CD4-positive, alpha-beta memory T cell (primary cell): ENCODE measurements at regions of chr10 and their contacts with region 1.

Region 1: DNA sequence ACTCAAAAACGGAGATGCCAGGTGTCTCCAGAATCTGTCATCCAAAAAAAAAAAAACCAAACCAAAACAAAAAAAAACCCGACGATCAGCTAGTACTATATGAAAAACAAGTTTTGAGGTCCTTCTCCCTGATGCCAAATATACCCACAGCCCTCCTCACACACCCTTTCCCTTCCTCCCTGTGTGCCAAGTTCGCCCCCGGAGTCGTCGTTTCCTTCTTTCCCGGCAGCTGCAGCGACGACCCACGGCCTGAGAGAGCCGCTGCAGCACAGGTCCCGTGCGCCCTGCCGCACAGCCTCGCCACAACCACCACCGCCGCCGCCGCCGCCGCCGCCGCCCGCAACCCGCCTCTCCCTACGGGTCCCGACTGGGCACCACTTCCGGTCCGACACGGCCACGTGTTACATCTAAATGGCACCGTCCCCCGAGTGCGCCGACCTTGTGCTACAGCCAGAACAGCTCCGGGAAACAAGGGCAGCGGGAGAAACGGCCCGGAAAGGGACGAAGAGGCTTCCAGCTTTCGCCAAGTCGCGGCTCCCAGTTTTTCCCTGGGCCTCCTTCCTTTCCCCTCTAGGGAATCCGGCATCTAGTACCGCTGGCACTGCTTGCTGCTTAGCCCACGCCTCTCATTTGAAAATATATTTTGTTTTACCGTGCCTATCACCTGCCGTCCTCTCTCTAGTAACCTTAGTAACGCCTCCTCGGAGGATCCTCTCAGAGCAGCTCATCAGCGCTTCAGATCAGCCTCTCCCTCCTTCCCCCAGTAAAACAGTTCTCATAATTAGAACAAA is at the start of gene FRA10AC1:
- DNase-seq: peak; percentile 83 to 89 (median 84)
- H3K4me3 ChIP-seq: peak within 1 kb of the TSS; percentile 78 to 100
- H3K4me3 Mint-ChIP-seq: no peak within 1 kb of the TSS
- H3K27ac ChIP-seq: peak within 1 kb of the TSS; percentile 63
- H3K27ac Mint-ChIP-seq: no peak within 1 kb of the TSS
- H3K4me1 ChIP-seq: peaks cover 28% of the 10 kb centered on the region
- H3K4me1 Mint-ChIP-seq: peaks cover 6 to 23% (median 16%) of the 10 kb centered on the region in 4 donors
- H3K27me3 ChIP-seq: no peaks in the 10 kb centered on the region
- H3K27me3 Mint-ChIP-seq: no peaks in the 10 kb centered on the region
- total RNA-seq, gene FRA10AC1: 21.6 to 32.5 TPM

Region 2: DNA sequence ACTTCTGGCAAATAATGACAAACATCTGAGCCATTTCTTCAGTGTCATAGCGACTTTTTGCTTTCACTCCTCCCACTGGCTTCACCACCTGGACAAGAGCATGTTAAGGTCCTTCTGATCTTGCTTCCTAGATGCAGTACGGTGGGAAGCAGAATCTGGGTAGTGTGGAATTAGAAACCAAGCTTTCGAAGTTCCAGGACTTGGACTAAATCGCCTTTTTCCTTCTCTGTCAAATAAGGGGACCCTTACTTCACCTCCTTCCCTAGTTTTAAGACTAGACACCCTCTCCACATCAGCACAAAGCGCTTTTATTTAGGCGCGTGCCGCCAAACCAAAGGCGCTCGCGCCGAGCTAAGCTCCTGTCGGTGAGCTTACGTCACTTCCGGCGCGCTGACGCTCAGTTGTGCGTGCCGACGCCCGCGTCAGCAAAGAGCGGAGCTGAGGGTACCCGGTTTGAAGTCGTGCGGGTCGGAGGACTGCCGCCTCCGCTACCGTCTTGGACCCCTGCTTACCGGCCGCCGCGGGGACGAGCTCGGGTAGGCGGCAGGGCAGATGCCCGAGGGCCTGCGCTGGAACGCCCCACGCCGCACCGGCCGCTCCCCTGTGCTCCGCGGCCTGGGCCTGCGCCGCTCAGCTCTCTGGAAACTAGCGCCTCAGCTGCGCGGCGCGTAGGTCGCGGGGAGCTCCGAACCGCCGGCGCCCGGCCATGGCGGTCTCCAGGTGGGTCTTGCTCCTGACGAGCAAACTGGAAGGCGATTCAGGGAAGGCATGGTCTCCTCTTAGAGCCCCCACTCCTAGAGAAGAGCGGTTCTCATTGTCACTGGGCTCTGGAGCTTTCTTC is 1778.8 kb before region 1 on chr10 and contains the start of gene BTAF1:
- CTCF ChIA-PET with region 1: no interaction called
- POLR2A ChIA-PET with region 1: interaction called, 7 read pairs
- intact Hi-C with region 1: loop called (anchors 5 kb)
- DNase-seq: peak; percentile 89 to 93 (median 92)
- H3K4me3 ChIP-seq: peak within 1 kb of the TSS; percentile 79 to 87
- H3K4me3 Mint-ChIP-seq: peak within 1 kb of the TSS; percentile 90 to 99 (median 94)
- H3K27ac ChIP-seq: peak within 1 kb of the TSS; percentile 91
- H3K27ac Mint-ChIP-seq: peak within 1 kb of the TSS; percentile 96 to 100 (median 99)
- H3K4me1 ChIP-seq: peaks cover 50% of the 10 kb centered on the region
- H3K4me1 Mint-ChIP-seq: peaks cover 29 to 50% (median 38%) of the 10 kb centered on the region in 4 donors
- H3K27me3 ChIP-seq: no peaks in the 10 kb centered on the region
- H3K27me3 Mint-ChIP-seq: peaks cover 2% of the 10 kb centered on the region in 2 donors
- total RNA-seq, gene BTAF1: 69.1 to 76.9 TPM

Region 3: DNA sequence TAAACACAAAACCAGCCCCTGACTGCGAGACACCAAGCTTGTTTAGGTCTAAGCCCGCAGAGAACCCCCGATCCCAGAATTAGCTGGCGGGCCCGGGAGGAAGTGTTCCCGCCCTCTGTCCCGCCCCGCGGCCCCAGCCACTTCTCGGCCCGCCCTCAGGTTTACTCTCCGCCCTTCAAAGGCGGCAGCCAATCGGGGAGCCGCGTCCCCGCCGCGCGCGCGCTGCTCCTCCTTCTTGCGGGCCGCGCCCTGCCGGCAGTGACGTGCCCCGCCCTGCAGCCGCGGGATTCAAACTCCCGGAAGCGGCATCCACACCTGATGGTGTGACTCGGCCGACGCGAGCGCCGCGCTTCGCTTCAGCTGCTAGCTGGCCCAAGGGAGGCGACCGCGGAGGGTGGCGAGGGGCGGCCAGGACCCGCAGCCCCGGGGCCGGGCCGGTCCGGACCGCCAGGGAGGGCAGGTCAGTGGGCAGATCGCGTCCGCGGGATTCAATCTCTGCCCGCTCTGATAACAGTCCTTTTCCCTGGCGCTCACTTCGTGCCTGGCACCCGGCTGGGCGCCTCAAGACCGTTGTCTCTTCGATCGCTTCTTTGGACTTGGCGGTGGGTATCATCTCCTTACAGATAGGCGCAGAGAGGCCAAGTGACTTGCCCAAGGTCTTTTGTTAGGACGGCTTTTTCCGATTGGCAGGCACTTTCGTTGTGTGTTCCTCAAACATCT is 205.9 kb before region 1 on chr10 and contains the start of gene CEP55:
- CTCF ChIA-PET with region 1: no interaction called
- POLR2A ChIA-PET with region 1: no interaction called
- intact Hi-C with region 1: loop called (anchors 2 kb)
- DNase-seq: peak; percentile 93 to 97 (median 94)
- H3K4me3 ChIP-seq: peak within 1 kb of the TSS; percentile 83 to 94
- H3K4me3 Mint-ChIP-seq: peak within 1 kb of the TSS; percentile 92 to 95 (median 93)
- H3K27ac ChIP-seq: peak within 1 kb of the TSS; percentile 37
- H3K27ac Mint-ChIP-seq: peak within 1 kb of the TSS; percentile 54 to 92 (median 89)
- H3K4me1 ChIP-seq: peaks cover 23% of the 10 kb centered on the region
- H3K4me1 Mint-ChIP-seq: peaks cover 13 to 23% (median 19%) of the 10 kb centered on the region in 4 donors
- H3K27me3 ChIP-seq: no peaks in the 10 kb centered on the region
- H3K27me3 Mint-ChIP-seq: no peaks in the 10 kb centered on the region
- total RNA-seq, gene CEP55: 0.17 to 0.30 TPM

Region 4: GRCh38 chr10:93816123-93816747 is 113.8 kb after region 1 on chr10:
- CTCF ChIA-PET with region 1: interaction called, 4 read pairs
- POLR2A ChIA-PET with region 1: no interaction called
- intact Hi-C with region 1: loop called (anchors 1 kb)
- DNase-seq: peak in 4 of 5 donors; percentile 9 to 16 (median 10)
- H3K4me3 ChIP-seq: no peak overlapping the region
- H3K4me3 Mint-ChIP-seq: no peak overlapping the region
- H3K27ac ChIP-seq: no peak overlapping the region
- H3K27ac Mint-ChIP-seq: no peak overlapping the region
- H3K4me1 ChIP-seq: no peaks in the 10 kb centered on the region
- H3K4me1 Mint-ChIP-seq: peaks cover 0 to 3% (median 0%) of the 10 kb centered on the region in 4 donors
- H3K27me3 ChIP-seq: no peaks in the 10 kb centered on the region
- H3K27me3 Mint-ChIP-seq: peaks cover 22 to 33% of the 10 kb centered on the region in 2 donors

Region 5: GRCh38 chr10:93893646-93894515 is 191.5 kb after region 1 on chr10 and contains the start of gene SLC35G1:
- CTCF ChIA-PET with region 1: no interaction called
- POLR2A ChIA-PET with region 1: interaction called, 4 read pairs
- intact Hi-C with region 1: loop called (anchors 5 kb)
- DNase-seq: peak; percentile 48 to 72 (median 63)
- H3K4me3 ChIP-seq: peak within 1 kb of the TSS; percentile 50 to 68
- H3K4me3 Mint-ChIP-seq: peak within 1 kb of the TSS; percentile 85 to 92 (median 88)
- H3K27ac ChIP-seq: peak within 1 kb of the TSS; percentile 40
- H3K27ac Mint-ChIP-seq: peak within 1 kb of the TSS; percentile 66 to 83 (median 78)
- H3K4me1 ChIP-seq: peaks cover 26% of the 10 kb centered on the region
- H3K4me1 Mint-ChIP-seq: peaks cover 30 to 41% (median 32%) of the 10 kb centered on the region in 4 donors
- H3K27me3 ChIP-seq: no peaks in the 10 kb centered on the region
- H3K27me3 Mint-ChIP-seq: peaks cover 5% of the 10 kb centered on the region in 2 donors
- total RNA-seq, gene SLC35G1: 5.3 to 6.2 TPM

Region 6: GRCh38 chr10:94362360-94363250 is 660.2 kb after region 1 on chr10 and contains the start of gene NOC3L:
- CTCF ChIA-PET with region 1: no interaction called
- POLR2A ChIA-PET with region 1: interaction called, 3 read pairs
- intact Hi-C with region 1: loop called (anchors 5 kb)
- DNase-seq: peak; percentile 91 to 93 (median 92)
- H3K4me3 ChIP-seq: peak within 1 kb of the TSS; percentile 64 to 82
- H3K4me3 Mint-ChIP-seq: peak within 1 kb of the TSS; percentile 94 to 97 (median 96)
- H3K27ac ChIP-seq: peak within 1 kb of the TSS; percentile 86
- H3K27ac Mint-ChIP-seq: peak within 1 kb of the TSS; percentile 93 to 99 (median 97)
- H3K4me1 ChIP-seq: peaks cover 26% of the 10 kb centered on the region
- H3K4me1 Mint-ChIP-seq: peaks cover 25 to 43% (median 34%) of the 10 kb centered on the region in 4 donors
- H3K27me3 ChIP-seq: no peaks in the 10 kb centered on the region
- H3K27me3 Mint-ChIP-seq: peaks cover 5 to 9% of the 10 kb centered on the region in 2 donors
- total RNA-seq, gene NOC3L: 21.8 to 22.5 TPM